ENCODE measurements at regions of chr11 and their contacts with region 1.

Region 1: DNA sequence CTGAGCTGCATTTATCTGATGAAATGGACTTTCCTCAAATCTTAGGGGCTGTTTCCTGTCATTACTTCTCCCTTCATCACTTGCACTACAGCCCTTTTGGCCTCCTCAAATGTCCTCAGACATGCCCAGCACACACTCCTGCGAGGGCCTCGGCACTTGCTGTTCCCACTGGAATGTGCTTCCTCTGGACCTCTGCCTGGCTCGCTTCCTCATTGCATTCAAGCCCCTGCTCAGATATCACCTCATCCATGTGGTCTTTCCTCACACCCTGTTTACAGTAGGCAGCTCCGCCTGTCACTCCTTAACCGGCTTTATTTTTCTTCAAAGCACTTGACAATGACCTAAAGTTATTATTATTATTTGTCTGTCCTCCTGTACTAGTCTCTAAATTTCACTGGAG is 9.0 kb downstream of the NAT10 start:
- DNase-seq: no peak
- H3K4me3 ChIP-seq: no peak overlapping the region
- H3K27ac ChIP-seq: no peak overlapping the region
- H3K4me1 ChIP-seq: no peaks in the 10 kb centered on the region
- H3K27me3 ChIP-seq: no peaks in the 10 kb centered on the region
- CTCF ChIP-seq: no peak

Region 2: GRCh38 chr11:34318111-34319037 is 203.9 kb after region 1 on chr11:
- intact Hi-C with region 1: no loop called
- DNase-seq: peak; percentile 38
- H3K4me3 ChIP-seq: no peak overlapping the region
- H3K27ac ChIP-seq: peak overlapping the region; percentile 74
- H3K4me1 ChIP-seq: peaks cover 6% of the 10 kb centered on the region
- H3K27me3 ChIP-seq: no peaks in the 10 kb centered on the region
- CTCF ChIP-seq: no peak

Region 3: GRCh38 chr11:34454308-34455032 is 340.0 kb after region 1 on chr11:
- intact Hi-C with region 1: loop called (anchors 10 kb)
- DNase-seq: no peak
- H3K4me3 ChIP-seq: no peak overlapping the region
- H3K27ac ChIP-seq: no peak overlapping the region
- H3K4me1 ChIP-seq: no peaks in the 10 kb centered on the region
- H3K27me3 ChIP-seq: no peaks in the 10 kb centered on the region
- CTCF ChIP-seq: no peak